Esophagus muscularis mucosa (tissue), 4 donors: ENCODE measurements at regions of chr2 and their contacts with region 1.

Region 1: DNA sequence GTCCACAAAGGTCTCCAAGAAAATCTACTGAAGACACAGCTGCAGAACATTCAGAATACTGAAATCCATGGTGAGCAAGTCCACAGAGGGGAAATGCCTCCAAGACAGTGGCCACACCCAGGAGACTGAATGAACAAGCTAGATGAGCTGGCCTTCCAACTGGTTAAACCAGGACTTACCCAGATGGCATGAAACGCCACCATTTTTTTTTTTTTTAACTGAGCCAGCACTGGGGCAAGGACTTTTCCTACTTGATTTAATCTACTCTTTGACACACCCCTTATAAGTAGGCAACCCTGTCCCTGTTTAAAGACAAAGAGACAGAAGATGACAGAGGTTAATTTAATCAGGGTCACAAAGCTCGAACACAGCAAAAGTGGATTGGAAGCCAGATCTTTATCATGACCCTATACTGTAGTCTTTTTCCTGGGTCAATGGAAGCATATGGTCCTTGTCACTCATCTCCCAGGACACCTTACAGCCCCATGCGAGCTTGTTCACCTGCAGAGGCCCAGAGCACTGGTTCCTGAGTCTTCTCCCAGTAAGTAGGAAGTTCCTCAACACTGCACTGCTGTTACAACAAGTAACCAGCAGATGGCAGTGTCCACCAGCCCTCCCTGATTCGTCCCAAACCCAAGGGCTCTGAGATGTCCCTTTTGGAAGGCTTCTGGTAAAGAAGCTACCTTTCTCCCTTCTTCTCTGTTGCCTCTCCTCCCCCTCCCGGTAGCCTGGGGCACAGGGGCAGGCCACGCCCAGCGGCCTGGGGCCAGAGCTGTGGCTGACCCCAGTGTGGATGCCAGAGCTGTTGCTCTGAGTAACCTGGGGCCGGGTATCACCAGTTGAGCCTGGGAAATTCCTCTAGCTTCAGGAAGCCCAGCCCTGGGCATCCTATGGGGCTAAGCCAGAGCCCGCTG is 5.6 kb upstream of the GDF7 start:
- DNase-seq: no peak
- H3K4me3 ChIP-seq: no peak overlapping the region
- H3K27ac ChIP-seq: no peak overlapping the region
- H3K4me1 ChIP-seq: peaks cover 10 to 32% (median 27%) of the 10 kb centered on the region in 4 donors
- H3K27me3 ChIP-seq: peaks cover 4 to 58% (median 23%) of the 10 kb centered on the region in 4 donors
- CTCF ChIP-seq: peak; percentile 93 to 98 (median 98)
- EP300 ChIP-seq: no peak
- POLR2A ChIP-seq: no peak

Region 2: DNA sequence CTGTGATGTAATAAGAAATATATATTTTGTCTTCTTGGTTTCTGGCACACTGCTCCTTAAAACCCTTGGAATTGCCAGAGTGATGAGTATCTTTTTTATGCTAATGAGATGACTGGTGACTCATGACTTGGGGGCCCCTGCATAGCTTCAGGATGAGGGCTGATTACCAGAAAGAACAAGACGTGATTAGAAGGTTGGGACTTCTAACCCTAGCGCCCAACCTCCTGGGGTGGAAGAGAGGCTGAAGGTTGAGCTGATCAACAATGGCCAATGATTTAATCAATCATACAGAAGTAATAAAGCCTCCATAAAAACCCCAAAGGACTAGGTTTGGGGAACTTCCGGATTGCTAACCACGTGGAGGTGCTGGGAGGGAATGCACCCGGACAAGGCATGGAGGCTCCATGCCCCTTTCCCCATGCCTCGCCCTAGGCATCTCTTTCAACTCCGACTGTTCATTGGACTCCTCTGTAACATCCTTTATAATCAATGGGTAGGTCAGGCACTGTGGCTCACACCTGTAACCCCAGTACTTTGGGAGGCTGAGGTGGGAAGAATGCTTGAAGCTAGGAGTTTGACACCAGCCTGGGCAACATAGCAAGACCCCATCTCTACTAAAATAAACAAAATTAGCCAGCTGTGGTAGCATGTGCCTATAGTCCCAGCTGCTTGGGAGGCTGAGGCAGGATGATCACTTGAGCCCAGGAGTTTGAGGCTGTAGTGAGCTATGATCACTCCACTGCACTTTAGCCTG is 99.4 kb before region 1 on chr2:
- intact Hi-C with region 1: no loop called
- DNase-seq: no peak
- H3K4me3 ChIP-seq: no peak overlapping the region
- H3K27ac ChIP-seq: no peak overlapping the region
- H3K4me1 ChIP-seq: peaks cover 4 to 13% (median 8%) of the 10 kb centered on the region in 4 donors
- H3K27me3 ChIP-seq: no peaks in the 10 kb centered on the region
- CTCF ChIP-seq: no peak
- EP300 ChIP-seq: no peak
- POLR2A ChIP-seq: no peak

Region 3: GRCh38 chr2:20576598-20577115 is 84.7 kb before region 1 on chr2:
- intact Hi-C with region 1: no loop called
- DNase-seq: no peak
- H3K4me3 ChIP-seq: no peak overlapping the region
- H3K27ac ChIP-seq: peak overlapping the region in 1 of 4 donors; percentile 80
- H3K4me1 ChIP-seq: peaks cover 80 to 89% (median 84%) of the 10 kb centered on the region in 4 donors
- H3K27me3 ChIP-seq: no peaks in the 10 kb centered on the region
- CTCF ChIP-seq: no peak
- EP300 ChIP-seq: no peak
- POLR2A ChIP-seq: no peak

Region 4: GRCh38 chr2:20702563-20702962 is 41.2 kb after region 1 on chr2:
- intact Hi-C with region 1: no loop called
- DNase-seq: no peak
- H3K4me3 ChIP-seq: no peak overlapping the region
- H3K27ac ChIP-seq: no peak overlapping the region
- H3K4me1 ChIP-seq: peaks cover 0 to 8% (median 0%) of the 10 kb centered on the region in 4 donors
- H3K27me3 ChIP-seq: no peaks in the 10 kb centered on the region
- CTCF ChIP-seq: no peak
- EP300 ChIP-seq: no peak
- POLR2A ChIP-seq: no peak

Region 5: GRCh38 chr2:20822535-20823490 is 161.5 kb after region 1 on chr2 and contains the start of gene LDAH:
- intact Hi-C with region 1: loop called (anchors 10 kb)
- DNase-seq: peak; percentile 96
- H3K4me3 ChIP-seq: peak within 1 kb of the TSS; percentile 76 to 97 (median 86)
- H3K27ac ChIP-seq: peak within 1 kb of the TSS; percentile 87 to 95 (median 92)
- H3K4me1 ChIP-seq: peaks cover 4 to 10% (median 8%) of the 10 kb centered on the region in 4 donors
- H3K27me3 ChIP-seq: no peaks in the 10 kb centered on the region
- CTCF ChIP-seq: peak in 1 of 3 experiments; percentile 12
- EP300 ChIP-seq: no peak
- POLR2A ChIP-seq: no peak
- total RNA-seq, gene LDAH: 7.9 to 13.7 (median 11.9) TPM

Region 6: GRCh38 chr2:20962939-20963557 is 301.7 kb after region 1 on chr2:
- intact Hi-C with region 1: loop called (anchors 2 kb)
- DNase-seq: no peak
- H3K4me3 ChIP-seq: no peak overlapping the region
- H3K27ac ChIP-seq: no peak overlapping the region
- H3K4me1 ChIP-seq: peaks cover 0 to 18% (median 13%) of the 10 kb centered on the region in 4 donors
- H3K27me3 ChIP-seq: peaks cover 0 to 11% (median 0%) of the 10 kb centered on the region in 4 donors
- CTCF ChIP-seq: peak; percentile 86 to 88 (median 88)
- EP300 ChIP-seq: no peak
- POLR2A ChIP-seq: no peak

Region 7: DNA sequence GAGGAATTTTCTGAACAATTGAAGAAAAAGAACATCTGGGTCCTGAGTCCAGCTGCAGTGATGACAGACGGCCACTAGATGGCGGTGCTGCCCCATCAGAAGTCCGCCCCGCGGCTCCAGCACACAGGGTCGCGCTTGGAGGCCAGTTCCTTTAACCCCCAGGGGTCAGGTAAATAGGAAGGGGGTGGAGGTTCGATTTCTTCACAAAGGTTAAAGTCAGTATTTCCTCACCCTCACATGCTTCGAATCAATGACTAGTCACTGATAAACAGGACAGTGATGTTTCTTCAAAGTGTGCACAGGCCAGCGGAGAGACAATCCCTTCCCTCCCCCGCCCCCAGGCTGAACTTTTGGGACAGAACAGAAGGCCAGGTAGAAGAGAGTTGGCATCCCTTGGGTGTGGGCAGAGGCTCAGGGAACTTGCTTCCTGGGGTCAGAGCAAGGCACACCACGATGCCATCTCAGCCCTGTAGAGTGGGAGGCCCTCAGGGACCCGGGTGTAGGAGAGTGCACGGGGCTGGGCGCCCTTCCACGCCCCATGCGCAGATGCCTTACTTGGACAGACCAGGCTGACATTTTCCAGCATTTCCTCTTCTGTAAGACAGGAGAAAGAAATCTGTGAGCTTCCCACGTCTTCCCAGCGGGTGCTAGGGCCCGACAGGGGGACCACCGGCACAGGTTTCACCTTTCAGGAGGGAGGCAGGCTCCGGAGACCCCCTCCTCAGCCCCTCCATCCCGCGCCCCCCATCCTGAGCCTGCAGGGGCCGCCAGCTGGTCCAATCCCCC is 381.8 kb after region 1 on chr2:
- intact Hi-C with region 1: loop called (anchors 2 kb)
- DNase-seq: no peak
- H3K4me3 ChIP-seq: peak overlapping the region; percentile 16 to 37 (median 24)
- H3K27ac ChIP-seq: peak overlapping the region in 3 of 4 donors; percentile 28 to 65 (median 63)
- H3K4me1 ChIP-seq: peaks cover 16 to 55% (median 42%) of the 10 kb centered on the region in 4 donors
- H3K27me3 ChIP-seq: peaks cover 0 to 9% (median 0%) of the 10 kb centered on the region in 4 donors
- CTCF ChIP-seq: peak in 2 of 3 experiments; percentile 98
- EP300 ChIP-seq: no peak
- POLR2A ChIP-seq: no peak